ENCODE measurements at regions of chr3 and their contacts with region 1.

Region 1: GRCh38 chr3:188154014-188154808 is at the start of gene LPP:
- DNase-seq: peak; percentile 97
- H3K4me3 Mint-ChIP-seq: peak within 1 kb of the TSS; percentile 72
- H3K27ac Mint-ChIP-seq: peak within 1 kb of the TSS; percentile 86
- H3K4me1 Mint-ChIP-seq: peaks cover 56% of the 10 kb centered on the region
- H3K27me3 Mint-ChIP-seq: no peaks in the 10 kb centered on the region
- CTCF ChIP-seq: peak; percentile 21
- total RNA-seq, gene LPP: 219 and 264 TPM in 2 replicates

Region 2: DNA sequence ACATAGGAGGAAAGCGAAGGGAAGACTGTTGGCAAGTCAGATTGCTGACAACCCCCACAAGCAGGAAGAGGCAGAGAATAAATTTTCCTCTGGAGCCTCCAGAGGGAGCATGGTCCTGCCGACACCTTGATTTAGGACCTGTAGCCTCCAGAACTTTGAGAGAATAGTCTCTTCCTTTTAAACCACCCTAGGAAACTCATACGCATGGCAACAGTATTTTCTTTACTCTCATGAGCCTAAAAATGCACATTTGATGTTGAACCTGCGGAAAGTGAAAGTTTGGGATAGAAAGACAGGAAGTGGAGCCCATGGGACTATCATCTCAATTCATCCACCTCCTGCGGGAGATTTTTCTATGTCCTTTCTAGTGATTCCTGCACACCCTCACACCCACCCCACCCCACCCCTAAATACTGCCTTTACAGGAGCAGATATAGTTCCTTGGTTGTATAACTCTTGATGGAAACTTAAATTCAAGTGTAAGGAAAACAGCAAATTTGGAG is 116.9 kb before region 1 on chr3:
- CTCF ChIA-PET with region 1: no interaction called
- intact Hi-C with region 1: loop called (anchors 5 kb)
- DNase-seq: peak; percentile 59
- H3K4me3 Mint-ChIP-seq: no peak overlapping the region
- H3K27ac Mint-ChIP-seq: no peak overlapping the region
- H3K4me1 Mint-ChIP-seq: peaks cover 29% of the 10 kb centered on the region
- H3K27me3 Mint-ChIP-seq: no peaks in the 10 kb centered on the region
- CTCF ChIP-seq: peak; percentile 65

Region 3: DNA sequence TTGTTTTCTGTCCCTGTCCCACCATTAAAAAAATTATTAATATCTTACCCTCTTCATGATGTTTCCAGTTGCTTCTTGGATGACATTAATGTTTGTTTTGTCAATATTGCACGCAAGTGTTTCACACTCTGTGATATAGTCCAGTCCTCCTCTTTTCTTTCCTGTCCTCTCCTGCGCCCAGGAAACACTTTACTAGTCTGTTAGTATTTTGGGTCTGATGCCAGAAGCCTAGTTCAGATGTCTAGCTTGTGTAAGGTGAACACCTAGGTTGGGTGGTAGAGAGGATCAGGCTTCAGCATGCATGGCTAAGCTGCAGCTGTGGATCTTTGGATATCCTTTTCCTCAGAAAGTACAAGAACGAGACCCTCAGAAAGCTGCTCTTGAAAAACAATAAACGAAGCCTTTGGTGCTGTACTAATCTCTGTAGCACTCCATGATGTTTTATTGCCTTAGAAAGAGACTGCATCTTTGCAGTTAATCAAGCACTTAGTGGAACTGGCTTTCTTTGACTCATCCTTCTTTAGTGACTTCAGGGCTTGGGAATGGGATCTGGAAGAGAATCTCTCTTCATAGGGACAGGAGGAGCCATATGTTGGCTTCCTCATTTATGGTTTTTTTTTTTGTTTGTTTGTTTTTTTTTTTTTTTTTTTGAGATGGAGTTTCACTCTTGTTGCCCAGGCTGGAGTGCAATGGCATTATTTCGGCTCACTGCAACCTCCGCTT is 253.1 kb after region 1 on chr3:
- CTCF ChIA-PET with region 1: no interaction called
- intact Hi-C with region 1: no loop called
- DNase-seq: no peak
- H3K4me3 Mint-ChIP-seq: no peak overlapping the region
- H3K27ac Mint-ChIP-seq: no peak overlapping the region
- H3K4me1 Mint-ChIP-seq: no peaks in the 10 kb centered on the region
- H3K27me3 Mint-ChIP-seq: no peaks in the 10 kb centered on the region
- CTCF ChIP-seq: no peak

Measured in Calu3 (cell line).